A673 (cell line): ENCODE measurements at regions of chr12 and their contacts with region 1.

Region 1: DNA sequence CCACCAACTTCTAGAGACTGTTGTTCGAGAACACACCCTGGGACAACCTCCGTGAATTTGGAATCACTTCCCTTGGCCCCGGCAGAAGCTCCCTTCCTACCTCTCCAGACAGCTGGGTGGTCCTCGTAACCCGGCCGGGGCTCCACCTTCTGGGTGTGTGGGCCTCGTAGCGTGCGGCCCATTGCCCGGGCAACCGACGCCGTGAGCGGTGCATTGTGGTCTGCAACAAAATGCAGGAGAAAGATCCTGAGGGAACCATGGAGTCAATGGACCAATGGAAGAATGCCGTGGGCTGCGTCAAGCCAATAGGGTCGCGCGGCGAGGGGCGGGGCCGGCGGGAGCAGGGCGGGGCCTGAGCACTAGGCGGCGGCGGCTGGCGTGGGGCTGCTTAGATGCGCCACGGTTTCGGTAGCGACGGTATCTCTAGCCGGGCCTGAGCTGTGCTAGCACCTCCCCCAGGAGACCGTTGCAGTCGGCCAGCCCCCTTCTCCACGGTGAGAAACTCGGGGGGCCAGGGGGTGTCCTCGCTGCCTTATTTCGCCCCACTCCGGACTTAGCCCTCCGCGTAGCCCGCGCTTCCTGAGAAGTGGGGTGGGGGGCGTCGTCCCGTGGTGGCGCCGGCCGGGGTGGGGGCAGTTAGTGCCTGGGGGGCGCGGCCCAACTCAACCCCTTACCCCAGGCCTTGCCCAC is at the start of gene DYNLL1:
- DNase-seq: peak; percentile 97
- H3K4me3 ChIP-seq: peak within 1 kb of the TSS; percentile 93
- H3K27ac ChIP-seq: peak within 1 kb of the TSS; percentile 83
- H3K4me1 ChIP-seq: peaks cover 17% of the 10 kb centered on the region
- H3K27me3 ChIP-seq: no peaks in the 10 kb centered on the region
- CTCF ChIP-seq: no peak
- total RNA-seq, gene DYNLL1: 546 and 617 TPM in 2 replicates

Region 2: DNA sequence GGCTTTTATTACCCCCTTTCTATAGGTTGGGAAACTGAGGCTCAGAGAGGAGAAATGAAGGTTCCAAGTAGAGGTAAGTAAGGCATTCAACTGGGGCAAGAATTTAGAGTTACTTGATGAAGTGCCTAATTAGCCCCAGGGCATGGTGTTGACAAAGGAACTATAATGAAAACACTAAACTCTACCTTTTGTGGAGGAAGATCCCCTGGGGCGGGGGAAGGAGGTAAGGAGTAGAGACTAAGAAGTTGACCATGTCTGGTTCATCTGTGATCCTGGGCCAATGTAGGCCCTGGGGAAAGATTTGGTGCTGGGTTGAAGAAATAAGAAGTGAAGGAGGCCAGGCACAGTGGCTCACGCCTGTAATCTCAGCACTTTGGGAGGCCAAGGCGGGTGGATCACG is 74.2 kb before region 1 on chr12:
- CTCF ChIA-PET with region 1: no interaction called
- POLR2A ChIA-PET with region 1: no interaction called
- intact Hi-C with region 1: no loop called
- DNase-seq: peak; percentile 46
- H3K4me3 ChIP-seq: no peak overlapping the region
- H3K27ac ChIP-seq: no peak overlapping the region
- H3K4me1 ChIP-seq: no peaks in the 10 kb centered on the region
- H3K27me3 ChIP-seq: no peaks in the 10 kb centered on the region
- CTCF ChIP-seq: no peak

Region 3: GRCh38 chr12:120469450-120470149 is 26.3 kb before region 1 on chr12 and contains the start of gene SRSF9:
- CTCF ChIA-PET with region 1: no interaction called
- POLR2A ChIA-PET with region 1: interaction called, 5 read pairs
- intact Hi-C with region 1: loop called (anchors 2 kb)
- DNase-seq: peak; percentile 98
- H3K4me3 ChIP-seq: peak within 1 kb of the TSS; percentile 92
- H3K27ac ChIP-seq: peak within 1 kb of the TSS; percentile 94
- H3K4me1 ChIP-seq: peaks cover 15% of the 10 kb centered on the region
- H3K27me3 ChIP-seq: no peaks in the 10 kb centered on the region
- CTCF ChIP-seq: peak; percentile 94
- total RNA-seq, gene SRSF9: 308 and 328 TPM in 2 replicates

Region 4: DNA sequence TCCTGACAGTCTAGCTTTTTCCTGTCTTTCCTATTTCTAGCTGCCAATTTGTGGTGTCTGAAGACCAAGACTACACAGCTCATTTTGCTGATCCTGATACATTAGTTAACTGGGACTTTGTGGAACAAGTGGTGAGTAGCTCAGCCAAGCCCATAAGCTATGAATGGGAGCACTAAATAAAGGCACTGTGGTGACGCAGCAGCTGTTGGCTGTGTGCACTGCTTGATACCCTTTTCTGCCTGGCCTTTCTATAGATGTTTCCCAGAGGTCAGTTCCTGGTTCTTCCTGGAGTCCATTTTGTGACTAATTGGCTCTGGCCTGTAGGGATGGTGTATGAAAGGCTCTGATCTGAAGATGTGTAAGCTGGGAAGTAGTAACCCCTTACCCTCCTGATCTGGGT is 58.8 kb after region 1 on chr12:
- CTCF ChIA-PET with region 1: no interaction called
- POLR2A ChIA-PET with region 1: no interaction called
- intact Hi-C with region 1: no loop called
- DNase-seq: no peak
- H3K4me3 ChIP-seq: no peak overlapping the region
- H3K27ac ChIP-seq: no peak overlapping the region
- H3K4me1 ChIP-seq: no peaks in the 10 kb centered on the region
- H3K27me3 ChIP-seq: no peaks in the 10 kb centered on the region
- CTCF ChIP-seq: no peak

Region 5: GRCh38 chr12:120677765-120678473 is 182.1 kb after region 1 on chr12:
- CTCF ChIA-PET with region 1: no interaction called
- POLR2A ChIA-PET with region 1: no interaction called
- intact Hi-C with region 1: no loop called
- DNase-seq: peak; percentile 60
- H3K4me3 ChIP-seq: no peak overlapping the region
- H3K27ac ChIP-seq: no peak overlapping the region
- H3K4me1 ChIP-seq: peaks cover 7% of the 10 kb centered on the region
- H3K27me3 ChIP-seq: no peaks in the 10 kb centered on the region
- CTCF ChIP-seq: no peak

Region 6: GRCh38 chr12:120955232-120955631 is 459.4 kb after region 1 on chr12:
- CTCF ChIA-PET with region 1: no interaction called
- POLR2A ChIA-PET with region 1: no interaction called
- intact Hi-C with region 1: no loop called
- DNase-seq: no peak
- H3K4me3 ChIP-seq: no peak overlapping the region
- H3K27ac ChIP-seq: no peak overlapping the region
- H3K4me1 ChIP-seq: no peaks in the 10 kb centered on the region
- H3K27me3 ChIP-seq: no peaks in the 10 kb centered on the region
- CTCF ChIP-seq: no peak

Region 7: DNA sequence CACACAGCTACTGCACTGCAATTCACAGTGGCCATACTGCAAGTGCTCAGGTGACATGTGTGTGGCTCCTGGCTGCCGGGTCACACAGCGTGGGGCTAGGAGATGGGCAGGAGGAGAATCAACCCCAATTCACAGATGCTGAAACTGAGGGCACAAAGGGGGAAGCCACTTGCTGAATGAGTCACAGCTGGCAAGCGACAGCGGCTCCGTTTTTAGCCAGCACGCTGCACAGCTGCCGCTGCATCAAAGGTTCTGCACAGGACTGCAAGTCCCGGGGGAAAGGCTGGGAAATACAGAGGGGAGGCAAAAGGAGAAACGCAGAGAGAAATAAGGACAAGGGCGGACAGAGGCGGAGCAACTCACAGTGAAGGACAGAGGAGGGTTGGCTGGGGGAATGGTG is 1027.1 kb after region 1 on chr12:
- CTCF ChIA-PET with region 1: no interaction called
- POLR2A ChIA-PET with region 1: interaction called, 10 read pairs
- intact Hi-C with region 1: no loop called
- DNase-seq: no peak
- H3K4me3 ChIP-seq: no peak overlapping the region
- H3K27ac ChIP-seq: no peak overlapping the region
- H3K4me1 ChIP-seq: no peaks in the 10 kb centered on the region
- H3K27me3 ChIP-seq: no peaks in the 10 kb centered on the region
- CTCF ChIP-seq: no peak